Natural killer cell (primary cell): ENCODE measurements at regions of chr7 and their contacts with region 1.

Region 1: DNA sequence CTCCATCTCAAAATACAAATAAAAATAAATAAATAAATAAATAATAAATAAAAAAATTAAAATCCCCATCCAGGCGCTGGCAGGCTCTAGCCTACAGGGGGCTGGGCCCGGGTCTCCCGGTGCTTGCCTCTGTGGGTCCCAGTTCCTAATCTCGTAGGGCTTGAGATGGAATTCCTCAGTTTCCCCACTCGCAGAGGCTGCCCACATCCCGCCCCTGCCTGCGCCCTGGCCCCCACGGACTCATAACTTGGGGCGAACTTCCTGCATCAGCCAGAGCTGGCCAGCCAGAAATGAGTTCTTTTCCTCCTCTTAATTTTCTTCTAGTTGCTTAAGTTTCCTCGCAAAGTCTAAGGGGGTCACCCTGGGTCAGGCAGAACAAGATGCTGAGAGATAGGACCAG is 22.0 kb upstream of the SRRM3 start:
- DNase-seq: no peak
- ATAC-seq: no peak
- H3K4me3 ChIP-seq: no peak overlapping the region
- H3K4me3 Mint-ChIP-seq: no peak overlapping the region
- H3K27ac ChIP-seq: no peak overlapping the region
- H3K27ac Mint-ChIP-seq: no peak overlapping the region
- H3K4me1 ChIP-seq: peaks cover 9% of the 10 kb centered on the region
- H3K4me1 Mint-ChIP-seq: peaks cover 5 to 6% of the 10 kb centered on the region in 2 donors
- H3K27me3 ChIP-seq: no peaks in the 10 kb centered on the region
- H3K27me3 Mint-ChIP-seq: no peaks in the 10 kb centered on the region
- CTCF ChIP-seq: no peak

Region 2: GRCh38 chr7:76262683-76263402 is 83.2 kb after region 1 on chr7:
- intact Hi-C with region 1: loop called (anchors 2 kb)
- DNase-seq: peak; percentile 31 to 61
- ATAC-seq: peak; percentile 39 to 51 (median 44)
- H3K4me3 ChIP-seq: no peak overlapping the region
- H3K4me3 Mint-ChIP-seq: peak overlapping the region; percentile 13
- H3K27ac ChIP-seq: no peak overlapping the region
- H3K27ac Mint-ChIP-seq: no peak overlapping the region
- H3K4me1 ChIP-seq: peaks cover 11% of the 10 kb centered on the region
- H3K4me1 Mint-ChIP-seq: no peaks in the 10 kb centered on the region
- H3K27me3 ChIP-seq: peaks cover 9% of the 10 kb centered on the region
- H3K27me3 Mint-ChIP-seq: peaks cover 0 to 25% of the 10 kb centered on the region in 2 donors
- CTCF ChIP-seq: peak; percentile 60